ENCODE measurements at regions of chr17 and their contacts with region 1.

Region 1: GRCh38 chr17:67993596-67994361 is 2.5 kb downstream of the C17orf58 start:
- DNase-seq: peak; percentile 78
- H3K4me3 Mint-ChIP-seq: peak overlapping the region; percentile 91
- H3K27ac Mint-ChIP-seq: peak overlapping the region; percentile 79
- H3K4me1 Mint-ChIP-seq: peaks cover 26% of the 10 kb centered on the region
- H3K27me3 Mint-ChIP-seq: no peaks in the 10 kb centered on the region
- CTCF ChIP-seq: no peak

Region 2: DNA sequence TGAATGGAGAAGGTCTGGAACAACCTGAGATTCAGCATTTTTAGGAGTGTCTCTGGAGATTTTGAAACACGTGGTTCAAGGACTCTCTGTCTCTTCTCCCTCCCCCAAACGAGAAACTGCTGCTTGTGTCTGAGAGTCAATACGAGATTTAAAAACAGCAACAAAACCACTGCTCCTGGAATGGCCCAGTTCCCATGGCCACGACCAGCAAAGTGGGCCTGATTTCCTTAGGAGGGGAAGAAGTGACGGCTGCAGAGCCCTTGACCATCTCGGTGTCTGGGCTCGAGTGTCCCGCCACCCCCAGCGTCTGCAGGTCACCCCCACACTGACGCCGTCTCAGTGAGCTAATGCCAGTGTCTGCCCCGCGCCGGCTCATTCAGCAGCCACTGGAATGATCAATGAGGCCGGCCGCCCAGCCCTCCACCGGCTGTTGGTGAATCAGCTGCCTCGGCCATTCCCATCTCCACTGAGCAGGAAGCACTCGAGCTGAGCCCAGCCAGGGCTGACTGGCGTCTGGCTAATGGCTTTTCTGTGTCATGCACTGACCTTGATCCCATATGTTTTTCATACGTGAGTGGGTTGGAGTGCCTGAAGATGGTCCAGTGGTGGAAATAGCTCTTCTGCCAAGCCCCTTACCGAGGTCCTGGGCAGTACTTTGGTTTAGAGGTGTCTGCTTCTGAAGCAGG is 464.9 kb before region 1 on chr17:
- CTCF ChIA-PET with region 1: no interaction called
- POLR2A ChIA-PET with region 1: no interaction called
- intact Hi-C with region 1: no loop called
- DNase-seq: no peak
- H3K4me3 Mint-ChIP-seq: no peak overlapping the region
- H3K27ac Mint-ChIP-seq: no peak overlapping the region
- H3K4me1 Mint-ChIP-seq: no peaks in the 10 kb centered on the region
- H3K27me3 Mint-ChIP-seq: no peaks in the 10 kb centered on the region
- CTCF ChIP-seq: no peak

Region 3: DNA sequence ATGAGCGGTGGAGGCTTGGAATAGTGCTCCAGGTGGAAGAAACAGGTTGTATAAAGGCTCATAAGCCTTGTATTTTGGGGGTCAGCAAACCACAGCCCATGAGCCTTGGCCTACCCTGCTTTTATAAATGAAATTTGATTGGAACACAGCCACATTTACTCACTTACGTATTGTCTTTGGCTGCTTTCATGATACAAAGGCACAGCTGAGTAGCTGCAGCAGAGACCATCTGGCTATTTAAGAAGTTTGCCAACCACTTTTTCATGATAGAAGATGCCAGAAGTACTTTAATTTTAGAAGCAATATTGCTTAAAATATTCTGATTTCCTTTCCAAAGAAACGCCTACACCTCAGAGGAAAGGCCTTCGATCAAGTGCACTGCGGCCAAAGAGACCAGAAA is 71.3 kb before region 1 on chr17:
- CTCF ChIA-PET with region 1: no interaction called
- POLR2A ChIA-PET with region 1: no interaction called
- intact Hi-C with region 1: no loop called
- DNase-seq: no peak
- H3K4me3 Mint-ChIP-seq: no peak overlapping the region
- H3K27ac Mint-ChIP-seq: no peak overlapping the region
- H3K4me1 Mint-ChIP-seq: no peaks in the 10 kb centered on the region
- H3K27me3 Mint-ChIP-seq: no peaks in the 10 kb centered on the region
- CTCF ChIP-seq: no peak

Region 4: GRCh38 chr17:68011199-68011665 is 17.5 kb after region 1 on chr17:
- CTCF ChIA-PET with region 1: interaction called, 3 read pairs
- POLR2A ChIA-PET with region 1: interaction called, 12 read pairs
- intact Hi-C with region 1: no loop called
- DNase-seq: peak; percentile 48
- H3K4me3 Mint-ChIP-seq: no peak overlapping the region
- H3K27ac Mint-ChIP-seq: no peak overlapping the region
- H3K4me1 Mint-ChIP-seq: no peaks in the 10 kb centered on the region
- H3K27me3 Mint-ChIP-seq: no peaks in the 10 kb centered on the region
- CTCF ChIP-seq: peak; percentile 71

Region 5: DNA sequence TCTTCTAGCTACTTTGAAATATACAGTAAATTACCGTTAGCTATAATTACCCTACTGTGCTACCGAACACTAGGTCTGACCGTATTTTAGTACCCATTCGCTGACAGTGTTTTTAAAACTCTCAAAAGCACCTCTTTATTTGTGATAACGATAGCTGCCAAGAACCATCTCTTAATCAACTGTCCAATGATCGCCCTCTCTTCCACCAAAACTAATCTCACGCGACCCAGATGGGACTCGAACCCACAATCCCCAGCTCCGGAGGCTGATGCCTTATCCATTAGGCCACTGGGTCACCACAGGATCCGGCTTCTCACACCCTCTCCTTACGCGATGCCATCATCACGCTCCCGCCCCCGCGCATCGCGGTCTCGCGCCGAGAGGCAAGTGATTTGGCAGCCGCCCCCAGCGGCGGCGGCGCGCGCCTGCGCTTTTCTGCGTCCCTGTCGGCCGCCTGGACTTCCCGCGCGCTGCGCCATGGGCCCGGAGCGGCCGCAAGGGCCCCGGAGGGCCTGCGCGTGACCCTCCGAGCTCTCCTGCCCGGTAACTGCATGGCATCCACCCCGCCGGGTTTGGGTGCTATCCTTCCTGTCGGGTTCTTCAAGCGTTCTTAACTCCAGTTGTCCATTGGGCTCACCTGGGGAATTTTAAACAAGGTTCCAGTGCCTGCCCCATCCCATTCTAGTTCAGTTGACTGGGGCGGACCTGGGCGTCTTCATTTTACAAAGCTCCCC is 26.1 kb after region 1 on chr17:
- CTCF ChIA-PET with region 1: interaction called, 3 read pairs
- POLR2A ChIA-PET with region 1: interaction called, 84 read pairs
- intact Hi-C with region 1: loop called (anchors 2 kb)
- DNase-seq: peak; percentile 95
- H3K4me3 Mint-ChIP-seq: peak overlapping the region; percentile 86
- H3K27ac Mint-ChIP-seq: peak overlapping the region; percentile 84
- H3K4me1 Mint-ChIP-seq: peaks cover 6% of the 10 kb centered on the region
- H3K27me3 Mint-ChIP-seq: no peaks in the 10 kb centered on the region
- CTCF ChIP-seq: no peak

Region 6: DNA sequence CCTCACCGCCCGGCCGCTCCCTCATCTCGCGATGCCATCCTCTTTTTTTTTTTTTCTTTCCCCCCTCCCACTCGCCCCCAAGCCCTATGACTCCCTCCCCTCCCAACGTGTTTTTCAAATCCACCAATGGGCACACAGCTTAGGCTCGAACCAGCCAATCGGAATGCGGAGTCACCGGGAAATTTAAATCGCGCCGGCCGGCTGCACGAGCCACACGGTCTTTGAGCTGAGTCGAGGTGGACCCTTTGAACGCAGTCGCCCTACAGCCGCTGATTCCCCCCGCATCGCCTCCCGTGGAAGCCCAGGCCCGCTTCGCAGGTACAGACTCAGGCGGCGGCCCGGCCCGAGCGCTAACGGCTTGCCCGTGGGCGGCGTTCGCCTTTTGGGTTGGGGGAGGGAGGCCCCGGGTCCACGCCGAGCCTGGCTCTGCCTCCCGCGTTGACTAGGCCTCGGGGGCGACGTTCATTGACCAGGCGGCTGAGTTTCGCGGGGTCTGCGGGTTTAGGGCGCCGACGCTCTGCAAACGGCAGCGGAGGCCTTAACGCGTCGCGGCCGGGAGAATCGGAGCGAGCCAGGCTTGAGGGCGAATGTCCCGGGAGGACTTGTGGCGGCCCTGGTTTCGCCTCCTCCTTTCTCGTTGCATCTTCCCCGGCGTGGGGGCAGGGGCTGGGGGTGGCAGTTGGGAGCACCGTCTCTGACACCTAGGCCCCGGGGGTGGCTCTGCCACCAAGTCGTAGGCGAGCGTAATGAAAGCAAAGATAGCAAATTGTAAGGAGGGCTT is 41.9 kb after region 1 on chr17 and contains the start of gene KPNA2:
- CTCF ChIA-PET with region 1: interaction called, 3 read pairs
- POLR2A ChIA-PET with region 1: interaction called, 33 read pairs
- intact Hi-C with region 1: no loop called
- DNase-seq: peak; percentile 98
- H3K4me3 Mint-ChIP-seq: peak within 1 kb of the TSS; percentile 86
- H3K27ac Mint-ChIP-seq: peak within 1 kb of the TSS; percentile 81
- H3K4me1 Mint-ChIP-seq: no peaks in the 10 kb centered on the region
- H3K27me3 Mint-ChIP-seq: no peaks in the 10 kb centered on the region
- CTCF ChIP-seq: no peak
- total RNA-seq, gene KPNA2: 120 and 132 TPM in 2 replicates

Region 7: GRCh38 chr17:68101075-68101992 is 107.6 kb after region 1 on chr17:
- CTCF ChIA-PET with region 1: interaction called, 4 read pairs
- POLR2A ChIA-PET with region 1: interaction called, 20 read pairs
- intact Hi-C with region 1: loop called (anchors 10 kb)
- DNase-seq: peak; percentile 93
- H3K4me3 Mint-ChIP-seq: peak overlapping the region; percentile 96
- H3K27ac Mint-ChIP-seq: peak overlapping the region; percentile 94
- H3K4me1 Mint-ChIP-seq: peaks cover 10% of the 10 kb centered on the region
- H3K27me3 Mint-ChIP-seq: no peaks in the 10 kb centered on the region
- CTCF ChIP-seq: no peak

Region 8: DNA sequence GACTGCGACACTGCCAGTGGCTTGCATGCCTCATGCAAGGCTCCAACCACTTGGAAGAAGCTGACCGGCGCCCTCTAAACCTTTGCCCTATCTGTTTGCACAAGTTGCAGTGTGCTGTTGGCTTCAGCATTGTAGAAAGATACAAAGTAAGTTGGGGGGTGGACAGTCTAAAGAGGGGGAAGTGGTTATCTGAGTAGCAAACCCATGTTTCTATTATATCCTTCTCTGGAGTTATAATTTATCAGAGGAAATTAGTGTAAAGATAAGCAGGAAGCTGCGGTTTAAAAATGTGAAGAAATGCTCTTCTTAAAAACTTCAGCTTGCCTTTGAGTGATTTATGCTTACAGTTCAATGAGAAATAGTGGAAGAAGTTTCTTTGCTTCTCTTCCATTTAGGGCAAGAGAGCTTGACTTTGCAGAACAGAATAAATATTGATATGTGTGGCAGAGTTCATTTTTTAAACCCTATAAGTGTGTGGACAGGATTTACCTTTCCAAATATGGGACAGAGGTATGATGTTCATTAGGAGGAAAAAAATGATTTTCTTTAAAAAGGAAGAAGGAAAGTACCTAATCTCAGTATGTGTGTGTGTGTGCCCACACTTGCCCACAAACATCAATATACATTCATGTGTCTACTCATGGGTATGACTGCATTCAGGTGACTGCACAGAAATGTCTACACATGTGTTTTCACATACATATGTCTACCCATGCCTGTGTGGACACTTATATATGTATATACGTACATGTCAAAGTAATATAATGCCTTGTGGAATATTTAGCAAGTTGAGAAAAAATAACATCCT is 262.2 kb after region 1 on chr17:
- CTCF ChIA-PET with region 1: no interaction called
- POLR2A ChIA-PET with region 1: no interaction called
- intact Hi-C with region 1: no loop called
- DNase-seq: no peak
- H3K4me3 Mint-ChIP-seq: no peak overlapping the region
- H3K27ac Mint-ChIP-seq: no peak overlapping the region
- H3K4me1 Mint-ChIP-seq: no peaks in the 10 kb centered on the region
- H3K27me3 Mint-ChIP-seq: no peaks in the 10 kb centered on the region
- CTCF ChIP-seq: no peak

Measured in MCF 10A (cell line).